IMR-90 (cell line): ENCODE measurements at regions of chrX and their contacts with region 1.

Region 1: GRCh38 chrX:47523297-47523696 is 37.7 kb upstream of the ARAF start:
- DNase-seq: peak; percentile 55
- ATAC-seq: peak; percentile 98
- H3K4me3 ChIP-seq: peak overlapping the region; percentile 45
- H3K27ac ChIP-seq: peak overlapping the region; percentile 38
- H3K4me1 ChIP-seq: peaks cover 2% of the 10 kb centered on the region; the same call in 1 of the 2 replicates
- H3K27me3 ChIP-seq: no peaks in the 10 kb centered on the region
- CTCF ChIP-seq: peak; percentile 83
- POLR2A ChIP-seq: no peak
- RAD21 ChIP-seq: peak; percentile 87

Region 2: GRCh38 chrX:47497273-47497672 is 26.0 kb before region 1 on chrX:
- CTCF ChIA-PET with region 1: interaction called, 11 read pairs
- POLR2A ChIA-PET with region 1: interaction called, 3 read pairs
- dilution Hi-C with region 1: no loop called
- in situ Hi-C with region 1: no loop called
- intact Hi-C with region 1: loop called (anchors 1 kb)
- DNase-seq: peak; percentile 38
- ATAC-seq: no peak
- H3K4me3 ChIP-seq: no peak overlapping the region
- H3K27ac ChIP-seq: no peak overlapping the region
- H3K4me1 ChIP-seq: peaks cover 3% of the 10 kb centered on the region; the same call in 1 of the 2 replicates
- H3K27me3 ChIP-seq: peaks cover 3% of the 10 kb centered on the region
- CTCF ChIP-seq: peak; percentile 59
- POLR2A ChIP-seq: no peak
- RAD21 ChIP-seq: peak; percentile 72